CD8-positive, alpha-beta T cell (primary cell): ENCODE measurements at regions of chr7 and their contacts with region 1.

Region 1: DNA sequence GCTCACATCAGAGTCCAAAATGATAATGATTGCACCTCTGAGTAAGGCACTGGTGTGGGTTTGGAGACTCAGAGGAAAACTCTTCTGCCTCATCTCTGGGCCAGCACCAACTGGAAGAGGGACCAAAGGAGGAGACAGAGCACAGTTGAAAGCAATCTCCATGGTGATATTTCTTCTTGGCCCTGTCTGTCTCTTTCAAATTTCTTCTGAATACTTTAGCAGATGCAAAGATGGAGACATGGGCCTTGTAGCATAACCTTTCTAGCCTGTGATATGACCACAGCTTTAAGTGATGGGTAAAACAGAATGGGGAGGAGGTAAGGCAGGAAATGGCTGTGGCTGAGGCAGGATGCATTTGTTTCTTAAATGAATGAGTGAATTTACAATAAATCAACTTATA is 12.2 kb upstream of the GIMAP7 start:
- DNase-seq: peak in 5 of 9 experiments; percentile 29 to 77 (median 61)
- ATAC-seq: peak; percentile 92
- H3K4me3 ChIP-seq: peak overlapping the region in 1 of 2 experiments; percentile 27
- H3K4me3 Mint-ChIP-seq: peak overlapping the region; percentile 23
- H3K27ac ChIP-seq: peak overlapping the region; percentile 22 to 61
- H3K27ac Mint-ChIP-seq: peak overlapping the region; percentile 86
- H3K4me1 ChIP-seq: peaks cover 46% of the 10 kb centered on the region
- H3K4me1 Mint-ChIP-seq: peaks cover 78% of the 10 kb centered on the region
- H3K27me3 ChIP-seq: no peaks in the 10 kb centered on the region
- H3K27me3 Mint-ChIP-seq: no peaks in the 10 kb centered on the region
- CTCF ChIP-seq: no peak

Region 2: GRCh38 chr7:150487625-150488024 is 14.9 kb before region 1 on chr7:
- CTCF ChIA-PET with region 1: interaction called, 4 read pairs
- POLR2A ChIA-PET with region 1: interaction called, 5 read pairs
- intact Hi-C with region 1: loop called (anchors 1 to 2 kb)
- DNase-seq: no peak
- ATAC-seq: no peak
- H3K4me3 ChIP-seq: no peak overlapping the region
- H3K4me3 Mint-ChIP-seq: no peak overlapping the region
- H3K27ac ChIP-seq: no peak overlapping the region
- H3K27ac Mint-ChIP-seq: no peak overlapping the region
- H3K4me1 ChIP-seq: peaks cover 39% of the 10 kb centered on the region
- H3K4me1 Mint-ChIP-seq: peaks cover 64% of the 10 kb centered on the region
- H3K27me3 ChIP-seq: no peaks in the 10 kb centered on the region
- H3K27me3 Mint-ChIP-seq: no peaks in the 10 kb centered on the region
- CTCF ChIP-seq: no peak

Region 3: DNA sequence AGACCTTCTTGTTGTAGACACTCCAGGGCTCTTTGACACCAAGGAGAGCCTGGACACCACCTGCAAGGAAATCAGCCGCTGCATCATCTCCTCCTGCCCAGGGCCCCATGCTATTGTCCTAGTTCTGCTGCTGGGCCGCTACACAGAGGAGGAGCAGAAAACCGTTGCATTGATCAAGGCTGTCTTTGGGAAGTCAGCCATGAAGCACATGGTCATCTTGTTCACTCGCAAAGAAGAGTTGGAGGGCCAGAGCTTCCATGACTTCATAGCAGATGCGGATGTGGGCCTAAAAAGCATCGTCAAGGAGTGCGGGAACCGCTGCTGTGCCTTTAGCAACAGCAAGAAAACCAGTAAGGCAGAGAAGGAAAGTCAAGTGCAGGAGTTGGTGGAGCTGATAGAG is 17.6 kb after region 1 on chr7:
- CTCF ChIA-PET with region 1: interaction called, 5 read pairs
- POLR2A ChIA-PET with region 1: interaction called, 27 read pairs
- intact Hi-C with region 1: loop called in 1 of 2 experiments (anchors 1 kb)
- DNase-seq: peak in 6 of 9 experiments; percentile 9 to 75 (median 33)
- ATAC-seq: peak; percentile 27
- H3K4me3 ChIP-seq: peak overlapping the region; percentile 58 to 76
- H3K4me3 Mint-ChIP-seq: peak overlapping the region; percentile 100
- H3K27ac ChIP-seq: peak overlapping the region; percentile 58 to 75
- H3K27ac Mint-ChIP-seq: peak overlapping the region; percentile 91
- H3K4me1 ChIP-seq: peaks cover 12% of the 10 kb centered on the region
- H3K4me1 Mint-ChIP-seq: peaks cover 44% of the 10 kb centered on the region
- H3K27me3 ChIP-seq: no peaks in the 10 kb centered on the region
- H3K27me3 Mint-ChIP-seq: no peaks in the 10 kb centered on the region
- CTCF ChIP-seq: no peak

Region 4: GRCh38 chr7:150556521-150557138 is 54.1 kb after region 1 on chr7:
- CTCF ChIA-PET with region 1: no interaction called
- POLR2A ChIA-PET with region 1: no interaction called
- intact Hi-C with region 1: no loop called
- DNase-seq: peak in 3 of 9 experiments; percentile 52 to 83 (median 68)
- ATAC-seq: peak; percentile 96
- H3K4me3 ChIP-seq: peak overlapping the region in 1 of 2 experiments; percentile 13
- H3K4me3 Mint-ChIP-seq: peak overlapping the region; percentile 56
- H3K27ac ChIP-seq: peak overlapping the region; percentile 40 to 67
- H3K27ac Mint-ChIP-seq: peak overlapping the region; percentile 97
- H3K4me1 ChIP-seq: peaks cover 70% of the 10 kb centered on the region
- H3K4me1 Mint-ChIP-seq: peaks cover 86% of the 10 kb centered on the region
- H3K27me3 ChIP-seq: no peaks in the 10 kb centered on the region
- H3K27me3 Mint-ChIP-seq: no peaks in the 10 kb centered on the region
- CTCF ChIP-seq: no peak